Common myeloid progenitor, CD34-positive (primary cell): ENCODE measurements at regions of chr19 and their contacts with region 1.

Region 1: DNA sequence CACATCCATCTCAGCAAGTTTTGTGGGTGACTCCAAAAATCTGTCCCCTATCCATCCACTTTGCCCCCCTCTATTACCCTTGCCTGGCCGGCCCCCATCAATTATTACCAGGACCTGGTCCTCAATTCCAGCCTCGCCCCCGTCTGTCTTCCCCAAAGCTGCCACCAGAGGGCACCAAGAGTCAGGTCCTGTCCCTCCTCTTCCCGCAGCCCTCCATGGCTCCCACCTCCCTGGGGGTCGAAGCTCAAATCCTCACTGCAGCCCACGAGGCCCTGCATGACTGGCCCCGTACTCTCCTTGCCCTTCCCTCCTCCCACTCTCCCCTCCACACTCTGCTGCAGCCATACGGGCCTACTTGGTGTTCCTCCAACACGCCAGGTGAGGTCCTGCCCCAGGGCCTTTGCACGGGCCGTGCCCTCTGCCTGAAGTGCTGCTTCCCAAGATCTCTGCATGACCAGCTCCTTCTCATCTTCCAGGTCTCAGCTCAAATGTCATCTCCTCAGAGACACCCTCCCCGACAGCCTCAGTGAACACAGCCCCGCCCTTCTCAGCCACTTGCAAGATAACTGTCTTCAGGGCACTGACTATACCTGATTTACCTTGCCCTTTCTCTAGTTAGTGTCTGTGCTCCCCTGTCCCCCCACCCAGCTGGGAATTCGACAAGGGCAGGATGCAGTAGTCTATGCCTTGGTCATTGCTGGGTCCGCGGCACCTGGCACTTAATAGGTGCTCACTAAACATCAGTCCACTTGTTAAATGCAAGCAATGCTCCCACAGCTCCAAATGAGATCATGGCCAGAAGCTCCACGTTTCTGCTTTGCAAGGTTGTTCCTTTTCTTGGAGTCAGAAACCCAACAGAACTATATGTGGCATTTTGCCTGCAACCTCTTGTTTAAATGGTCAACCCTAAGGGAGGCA is 16.8 kb upstream of the SEMA6B start:
- DNase-seq: peak; percentile 54 to 70 (median 62)
- H3K4me3 ChIP-seq: no peak overlapping the region
- H3K27ac ChIP-seq: no peak overlapping the region
- H3K4me1 ChIP-seq: peaks cover 0 to 13% (median 9%) of the 10 kb centered on the region in 4 experiments
- H3K27me3 ChIP-seq: peaks cover 0 to 69% (median 8%) of the 10 kb centered on the region in 5 experiments

Region 2: GRCh38 chr19:4589579-4590410 is 13.5 kb after region 1 on chr19:
- CTCF ChIA-PET with region 1: interaction called, 13 read pairs
- POLR2A ChIA-PET with region 1: no interaction called
- DNase-seq: peak; percentile 44 to 66 (median 63)
- H3K4me3 ChIP-seq: no peak overlapping the region
- H3K27ac ChIP-seq: no peak overlapping the region
- H3K4me1 ChIP-seq: peaks cover 0 to 6% (median 3%) of the 10 kb centered on the region in 4 experiments
- H3K27me3 ChIP-seq: peaks cover 0 to 30% (median 11%) of the 10 kb centered on the region in 5 experiments

Region 3: DNA sequence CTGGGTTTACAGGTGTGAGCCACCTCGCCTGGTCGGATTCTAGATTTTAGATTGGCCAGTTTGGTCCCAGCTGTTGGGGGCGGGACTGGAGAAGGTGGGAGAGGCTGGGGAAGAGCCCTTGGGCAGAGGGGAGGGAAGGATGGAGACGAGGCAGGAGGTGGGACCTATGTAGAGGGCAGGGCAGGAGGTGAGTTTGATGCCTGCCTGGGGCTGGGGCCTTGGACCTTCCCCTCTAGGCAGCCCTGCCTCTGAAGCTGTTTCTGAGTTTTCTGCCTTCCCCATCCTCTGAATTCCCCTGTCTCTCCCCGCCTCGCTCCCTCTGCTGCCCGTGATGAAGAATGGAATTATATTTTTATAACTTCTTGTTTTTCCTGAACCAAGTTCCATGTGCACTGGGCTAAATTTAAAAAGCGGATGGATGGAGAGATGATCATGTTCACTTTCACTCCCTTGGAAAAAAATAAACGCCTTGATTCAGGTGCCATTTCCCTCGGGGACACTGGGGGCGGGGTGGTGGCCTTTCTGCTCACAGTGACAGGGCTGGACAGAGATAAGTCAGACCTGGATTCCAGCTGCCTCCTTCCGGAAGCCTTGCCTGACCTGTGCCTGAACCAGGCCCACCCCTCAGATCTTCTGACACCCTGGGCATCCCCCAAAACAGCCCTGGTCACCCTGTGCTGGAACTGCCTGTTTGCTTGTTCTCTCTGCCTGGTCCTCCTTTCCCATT is 46.6 kb after region 1 on chr19:
- CTCF ChIA-PET with region 1: interaction called, 11 read pairs
- POLR2A ChIA-PET with region 1: no interaction called
- DNase-seq: no peak
- H3K4me3 ChIP-seq: no peak overlapping the region
- H3K27ac ChIP-seq: no peak overlapping the region
- H3K4me1 ChIP-seq: no peaks in the 10 kb centered on the region
- H3K27me3 ChIP-seq: peaks cover 0 to 5% (median 0%) of the 10 kb centered on the region in 5 experiments